Uterus (tissue), 4 donors: ENCODE measurements at regions of chr3 and their contacts with region 1.

Region 1: GRCh38 chr3:107429320-107430181 is 52.3 kb downstream of the CCDC54 start:
- DNase-seq: peak; percentile 73 to 77
- H3K4me3 ChIP-seq: peak overlapping the region; percentile 64 to 67
- H3K27ac ChIP-seq: peak overlapping the region; percentile 93 to 96
- H3K4me1 ChIP-seq: no peaks in the 10 kb centered on the region
- H3K27me3 ChIP-seq: no peaks in the 10 kb centered on the region
- CTCF ChIP-seq: peak; percentile 82 to 90 (median 86)
- POLR2A ChIP-seq: peak; percentile 7 to 23

Region 2: DNA sequence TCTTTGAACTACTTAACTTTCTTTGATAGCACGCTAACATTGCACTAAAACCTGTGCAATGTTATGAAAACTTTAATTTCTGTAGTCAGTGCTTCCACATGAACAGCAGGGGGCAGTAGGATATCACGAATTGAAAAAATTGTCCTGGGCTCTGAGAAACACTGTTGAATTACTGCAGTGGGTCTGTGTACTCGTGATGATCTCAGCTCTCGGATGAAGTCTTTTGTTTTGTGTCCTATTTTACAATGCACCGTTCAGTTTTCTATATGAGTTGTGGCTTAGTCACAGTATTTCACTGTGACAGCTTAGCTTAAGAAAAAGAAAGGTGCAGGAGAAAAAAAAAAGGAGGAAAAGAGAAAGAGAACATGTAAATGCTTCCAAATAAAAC is 193.6 kb before region 1 on chr3:
- intact Hi-C with region 1: loop called (anchors 10 kb)
- DNase-seq: peak; percentile 33 to 64
- H3K4me3 ChIP-seq: peak overlapping the region; percentile 25 to 31
- H3K27ac ChIP-seq: peak overlapping the region; percentile 66 to 77
- H3K4me1 ChIP-seq: no peaks in the 10 kb centered on the region
- H3K27me3 ChIP-seq: no peaks in the 10 kb centered on the region
- CTCF ChIP-seq: peak; percentile 86 to 93 (median 92)
- POLR2A ChIP-seq: no peak

Region 3: GRCh38 chr3:107251819-107252218 is 177.7 kb before region 1 on chr3:
- intact Hi-C with region 1: no loop called
- DNase-seq: no peak
- H3K4me3 ChIP-seq: no peak overlapping the region
- H3K27ac ChIP-seq: no peak overlapping the region
- H3K4me1 ChIP-seq: no peaks in the 10 kb centered on the region
- H3K27me3 ChIP-seq: no peaks in the 10 kb centered on the region
- CTCF ChIP-seq: no peak
- POLR2A ChIP-seq: no peak

Region 4: GRCh38 chr3:108036984-108037741 is 607.6 kb after region 1 on chr3:
- intact Hi-C with region 1: no loop called
- DNase-seq: no peak
- H3K4me3 ChIP-seq: no peak overlapping the region
- H3K27ac ChIP-seq: no peak overlapping the region
- H3K4me1 ChIP-seq: no peaks in the 10 kb centered on the region
- H3K27me3 ChIP-seq: no peaks in the 10 kb centered on the region
- CTCF ChIP-seq: no peak
- POLR2A ChIP-seq: no peak